Heart right ventricle (tissue), 16 donors: ENCODE measurements at regions of chr2 and their contacts with region 1.

Region 1: GRCh38 chr2:101983928-101984327 is 7.8 kb upstream of the IL1R2 start:
- DNase-seq: no peak
- ATAC-seq: peak in 5 of 8 donors; percentile 32 to 60 (median 49)
- H3K4me3 ChIP-seq: no peak overlapping the region
- H3K27ac ChIP-seq: no peak overlapping the region
- H3K4me1 ChIP-seq: peaks cover 0 to 10% (median 5%) of the 10 kb centered on the region in 9 donors
- H3K27me3 ChIP-seq: no peaks in the 10 kb centered on the region
- CTCF ChIP-seq: peak in 6 of 9 donors; percentile 32 to 52 (median 43)

Region 2: GRCh38 chr2:101419096-101419663 is 564.7 kb before region 1 on chr2:
- intact Hi-C with region 1: loop called in 1 of 10 experiments (anchors 10 kb)
- DNase-seq: peak in 1 of 2 donors; percentile 79
- ATAC-seq: peak; percentile 70 to 91 (median 82)
- H3K4me3 ChIP-seq: no peak overlapping the region
- H3K27ac ChIP-seq: no peak overlapping the region
- H3K4me1 ChIP-seq: peaks cover 0 to 7% (median 0%) of the 10 kb centered on the region in 9 donors
- H3K27me3 ChIP-seq: peaks cover 0 to 6% (median 0%) of the 10 kb centered on the region in 7 donors
- CTCF ChIP-seq: peak; percentile 71 to 87 (median 82)

Region 3: DNA sequence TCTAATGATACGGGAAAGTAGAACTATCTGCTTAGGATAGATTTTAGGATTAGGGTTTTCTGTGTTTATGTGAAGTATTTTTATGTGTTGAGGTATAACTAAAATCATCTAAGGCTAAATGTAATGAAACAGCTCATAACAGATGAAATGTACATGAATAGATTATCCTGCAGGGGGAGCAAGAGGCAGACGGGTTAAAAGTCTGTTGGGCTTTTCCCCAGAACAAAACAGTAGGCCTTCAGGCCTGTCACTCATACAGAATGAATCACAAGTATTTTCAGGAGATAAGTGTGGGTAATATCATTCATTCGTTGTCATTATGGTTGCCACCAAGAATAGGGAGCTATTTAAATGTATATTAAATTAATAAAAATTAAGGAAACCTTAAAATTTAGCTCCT is 100.1 kb before region 1 on chr2:
- intact Hi-C with region 1: loop called in 2 of 10 experiments (anchors 10 kb)
- DNase-seq: no peak
- ATAC-seq: peak; percentile 29 to 82 (median 62)
- H3K4me3 ChIP-seq: no peak overlapping the region
- H3K27ac ChIP-seq: peak overlapping the region in 1 of 10 donors; percentile 27
- H3K4me1 ChIP-seq: peaks cover 0 to 42% (median 30%) of the 10 kb centered on the region in 9 donors
- H3K27me3 ChIP-seq: no peaks in the 10 kb centered on the region
- CTCF ChIP-seq: peak; percentile 24 to 68 (median 57)

Region 4: GRCh38 chr2:101893681-101894381 is 90.1 kb before region 1 on chr2:
- intact Hi-C with region 1: loop called in 3 of 10 experiments (anchors 10 kb)
- DNase-seq: no peak
- ATAC-seq: no peak
- H3K4me3 ChIP-seq: no peak overlapping the region
- H3K27ac ChIP-seq: no peak overlapping the region
- H3K4me1 ChIP-seq: peaks cover 0 to 7% (median 0%) of the 10 kb centered on the region in 9 donors
- H3K27me3 ChIP-seq: no peaks in the 10 kb centered on the region
- CTCF ChIP-seq: no peak

Region 5: GRCh38 chr2:101961296-101962191 is 22.4 kb before region 1 on chr2:
- intact Hi-C with region 1: no loop called
- DNase-seq: peak; percentile 62 to 78
- ATAC-seq: peak; percentile 83 to 92 (median 89)
- H3K4me3 ChIP-seq: peak overlapping the region in 2 of 10 donors; percentile 7 to 41
- H3K27ac ChIP-seq: peak overlapping the region in 9 of 10 donors; percentile 20 to 93 (median 73)
- H3K4me1 ChIP-seq: peaks cover 0 to 57% (median 10%) of the 10 kb centered on the region in 9 donors
- H3K27me3 ChIP-seq: no peaks in the 10 kb centered on the region
- CTCF ChIP-seq: peak in 1 of 9 donors; percentile 7